ENCODE measurements at regions of chr19 and their contacts with region 1.

Region 1: DNA sequence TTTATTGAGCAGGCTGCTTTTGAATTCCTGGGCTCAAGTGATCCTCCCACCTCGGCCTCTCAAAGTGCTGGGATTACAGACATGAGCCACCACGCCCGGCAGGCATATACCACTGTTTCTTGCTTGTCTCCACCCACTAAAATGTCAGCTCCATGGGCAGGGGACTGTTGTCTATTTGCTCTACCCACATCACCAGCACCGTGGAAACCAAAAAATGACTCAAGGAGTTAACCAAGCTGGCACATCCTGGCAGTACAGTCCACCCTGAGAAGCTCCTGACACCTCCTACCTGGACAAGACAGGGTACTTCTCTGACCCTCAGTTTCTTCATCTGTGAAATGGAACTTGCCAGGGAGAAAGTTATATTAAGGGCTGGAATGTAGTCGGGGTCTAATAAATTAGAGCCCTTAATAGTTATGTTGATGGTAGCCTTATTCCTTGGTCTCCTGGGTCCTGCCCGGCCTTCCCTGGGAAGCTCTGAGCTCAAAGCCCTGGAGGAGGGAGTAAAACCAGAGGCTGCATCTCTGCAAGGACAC is 13.9 kb downstream of the RDH8 start:
- DNase-seq: no peak
- ATAC-seq: no peak

Region 2: GRCh38 chr19:9934132-9934950 is 92.9 kb before region 1 on chr19:
- intact Hi-C with region 1: loop called (anchors 10 kb)
- DNase-seq: peak; percentile 45 to 77
- ATAC-seq: peak; percentile 81